Body of pancreas (tissue), 4 donors: ENCODE measurements at regions of chr9 and their contacts with region 1.

Region 1: GRCh38 chr9:99140685-99141314 is 35.9 kb downstream of the TGFBR1 start:
- DNase-seq: peak; percentile 29 to 48 (median 40)
- ATAC-seq: peak; percentile 48
- H3K4me3 ChIP-seq: no peak overlapping the region
- H3K27ac ChIP-seq: no peak overlapping the region
- H3K4me1 ChIP-seq: no peaks in the 10 kb centered on the region
- H3K27me3 ChIP-seq: no peaks in the 10 kb centered on the region
- CTCF ChIP-seq: peak; percentile 38 to 86 (median 68)
- POLR2A ChIP-seq: no peak

Region 2: DNA sequence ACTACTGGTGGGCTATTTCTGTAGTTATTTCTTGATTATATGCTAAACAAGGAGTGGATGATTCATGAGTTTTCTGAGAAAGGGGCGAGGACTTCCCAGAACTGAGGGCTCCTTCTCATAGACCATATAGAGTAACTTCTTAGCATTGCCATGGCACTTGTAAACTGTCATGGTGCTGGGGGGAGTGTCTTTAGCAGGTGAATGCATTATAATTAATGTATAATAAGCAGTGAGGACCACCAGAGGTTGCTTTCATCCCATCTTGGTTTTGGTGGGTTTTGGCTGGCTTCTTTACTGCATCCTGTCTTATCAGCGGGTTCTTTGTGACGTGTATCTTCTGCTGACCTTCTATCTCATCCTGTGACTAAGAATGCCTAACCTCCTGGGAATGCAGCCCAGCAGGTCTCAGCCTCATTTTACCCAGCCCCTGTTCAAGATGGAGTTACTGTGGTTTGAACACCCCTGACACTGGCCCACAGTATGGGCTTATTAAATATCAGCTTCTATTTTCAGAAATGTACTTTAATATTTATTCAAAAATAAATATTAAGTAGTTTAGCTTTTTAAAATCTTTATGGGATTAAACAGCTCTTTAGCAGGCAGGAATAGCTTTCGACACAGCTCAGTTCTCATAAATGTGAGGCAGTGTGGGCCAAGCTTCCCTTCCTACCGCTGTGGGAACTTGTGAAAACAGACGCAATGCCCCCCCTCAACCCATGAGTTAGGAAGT is 288.9 kb before region 1 on chr9:
- intact Hi-C with region 1: loop called (anchors 10 kb)
- DNase-seq: no peak
- ATAC-seq: no peak
- H3K4me3 ChIP-seq: no peak overlapping the region
- H3K27ac ChIP-seq: no peak overlapping the region
- H3K4me1 ChIP-seq: peaks cover 12% of the 10 kb centered on the region
- H3K27me3 ChIP-seq: no peaks in the 10 kb centered on the region
- CTCF ChIP-seq: no peak
- POLR2A ChIP-seq: no peak

Region 3: GRCh38 chr9:99030092-99030511 is 110.7 kb before region 1 on chr9:
- intact Hi-C with region 1: no loop called
- DNase-seq: no peak
- ATAC-seq: peak; percentile 50
- H3K4me3 ChIP-seq: no peak overlapping the region
- H3K27ac ChIP-seq: no peak overlapping the region
- H3K4me1 ChIP-seq: no peaks in the 10 kb centered on the region
- H3K27me3 ChIP-seq: no peaks in the 10 kb centered on the region
- CTCF ChIP-seq: no peak
- POLR2A ChIP-seq: no peak